Panc1 (cell line): ENCODE measurements at regions of chr7 and their contacts with region 1.

Region 1: DNA sequence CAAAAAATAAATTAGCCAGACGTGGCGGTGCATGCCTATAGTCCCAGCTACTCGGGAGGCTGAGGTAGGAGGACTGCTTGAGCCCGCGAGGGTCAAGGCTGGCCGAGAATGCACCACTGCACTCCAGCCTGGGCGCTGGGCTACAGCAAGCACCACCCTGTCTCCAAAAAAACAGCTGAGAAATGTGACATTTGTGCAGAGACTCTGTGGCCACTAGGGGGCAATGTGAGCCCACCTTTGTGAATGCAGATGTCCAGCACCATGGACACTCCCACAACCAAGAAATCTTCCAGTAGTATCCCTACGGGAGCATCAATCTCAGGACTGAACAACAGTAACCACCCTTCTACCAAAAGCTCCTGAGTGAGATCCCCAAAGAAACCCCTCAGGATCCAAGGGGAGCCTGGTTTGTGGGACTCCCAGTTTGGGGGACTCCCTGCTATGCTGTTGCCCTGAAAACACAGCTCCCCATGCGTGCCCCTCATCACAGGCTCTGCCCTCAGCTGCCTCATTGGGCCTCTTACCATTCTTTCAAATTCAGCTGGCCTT is 6.2 kb upstream of the AHCYL2 start:
- DNase-seq: peak; percentile 73
- ATAC-seq: peak; percentile 93
- H3K4me3 ChIP-seq: no peak overlapping the region
- H3K27ac ChIP-seq: no peak overlapping the region
- H3K4me1 ChIP-seq: no peaks in the 10 kb centered on the region; the same call in 1 of the 2 replicates
- H3K27me3 ChIP-seq: no peaks in the 10 kb centered on the region
- CTCF ChIP-seq: peak; percentile 87

Region 2: DNA sequence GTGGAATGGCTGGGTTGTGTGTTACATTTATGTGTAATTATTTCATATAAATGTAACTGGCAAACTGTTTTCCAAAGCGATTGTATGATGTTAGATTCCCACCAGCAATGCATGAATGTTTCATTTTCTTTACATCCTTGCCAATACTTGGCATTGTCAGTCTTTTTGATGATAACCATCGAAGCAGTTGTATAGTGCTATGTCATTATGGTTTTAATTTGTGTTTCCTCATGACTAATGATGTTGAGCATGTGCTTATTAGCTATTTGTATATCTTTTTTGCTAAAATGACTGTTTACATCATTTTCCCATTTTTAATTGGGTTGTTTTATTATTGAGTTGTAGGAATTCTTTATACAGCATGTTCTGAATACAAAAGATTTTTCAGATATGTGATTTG is 28.5 kb after region 1 on chr7:
- CTCF ChIA-PET with region 1: no interaction called
- POLR2A ChIA-PET with region 1: no interaction called
- in situ Hi-C with region 1: no loop called
- intact Hi-C with region 1: no loop called
- DNase-seq: no peak
- ATAC-seq: no peak
- H3K4me3 ChIP-seq: no peak overlapping the region
- H3K27ac ChIP-seq: no peak overlapping the region
- H3K4me1 ChIP-seq: no peaks in the 10 kb centered on the region
- H3K27me3 ChIP-seq: no peaks in the 10 kb centered on the region
- CTCF ChIP-seq: no peak

Region 3: DNA sequence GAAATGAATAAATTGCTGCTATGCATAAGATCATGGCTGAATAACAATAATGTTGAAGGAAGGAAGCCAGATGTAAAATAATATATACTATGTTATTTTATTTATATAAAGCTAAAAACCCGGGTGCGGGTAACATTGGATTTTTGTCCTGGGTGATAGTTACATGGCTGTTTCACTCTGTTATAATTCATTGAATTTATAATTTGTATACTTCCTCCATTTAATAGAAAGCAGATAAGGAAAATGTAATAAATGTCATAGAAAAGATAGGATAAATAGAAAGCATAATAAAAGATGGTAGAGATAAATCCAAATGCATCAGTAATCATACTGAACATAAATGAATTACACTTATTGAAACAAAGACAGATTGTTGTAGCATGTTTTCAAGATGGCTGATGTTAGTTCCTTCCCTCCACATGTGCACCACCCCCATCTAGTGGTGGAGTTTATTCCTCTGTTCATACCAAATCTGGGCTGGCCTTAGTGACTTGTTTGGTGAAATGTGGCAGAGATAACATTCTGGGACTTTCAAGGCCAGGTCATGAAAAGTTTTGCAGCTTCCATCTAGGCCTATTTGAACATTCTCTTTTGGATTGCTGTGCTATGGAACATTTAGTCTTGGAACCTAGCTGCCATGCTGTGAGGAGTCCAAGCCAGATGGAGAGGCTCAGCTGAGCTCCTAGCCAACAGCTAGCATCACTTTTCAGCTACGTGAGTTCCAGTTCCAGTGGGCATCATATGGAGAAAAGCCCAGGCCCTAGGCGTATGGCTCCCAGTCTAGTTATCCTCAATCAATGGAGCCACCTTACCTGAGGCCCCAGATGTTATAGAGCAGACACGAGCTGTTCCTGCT is 53.1 kb after region 1 on chr7:
- CTCF ChIA-PET with region 1: interaction called, 8 read pairs
- POLR2A ChIA-PET with region 1: no interaction called
- in situ Hi-C with region 1: no loop called
- intact Hi-C with region 1: loop called (anchors 2 kb)
- DNase-seq: peak; percentile 47
- ATAC-seq: peak; percentile 83
- H3K4me3 ChIP-seq: no peak overlapping the region
- H3K27ac ChIP-seq: no peak overlapping the region
- H3K4me1 ChIP-seq: no peaks in the 10 kb centered on the region
- H3K27me3 ChIP-seq: no peaks in the 10 kb centered on the region
- CTCF ChIP-seq: peak; percentile 77

Region 4: DNA sequence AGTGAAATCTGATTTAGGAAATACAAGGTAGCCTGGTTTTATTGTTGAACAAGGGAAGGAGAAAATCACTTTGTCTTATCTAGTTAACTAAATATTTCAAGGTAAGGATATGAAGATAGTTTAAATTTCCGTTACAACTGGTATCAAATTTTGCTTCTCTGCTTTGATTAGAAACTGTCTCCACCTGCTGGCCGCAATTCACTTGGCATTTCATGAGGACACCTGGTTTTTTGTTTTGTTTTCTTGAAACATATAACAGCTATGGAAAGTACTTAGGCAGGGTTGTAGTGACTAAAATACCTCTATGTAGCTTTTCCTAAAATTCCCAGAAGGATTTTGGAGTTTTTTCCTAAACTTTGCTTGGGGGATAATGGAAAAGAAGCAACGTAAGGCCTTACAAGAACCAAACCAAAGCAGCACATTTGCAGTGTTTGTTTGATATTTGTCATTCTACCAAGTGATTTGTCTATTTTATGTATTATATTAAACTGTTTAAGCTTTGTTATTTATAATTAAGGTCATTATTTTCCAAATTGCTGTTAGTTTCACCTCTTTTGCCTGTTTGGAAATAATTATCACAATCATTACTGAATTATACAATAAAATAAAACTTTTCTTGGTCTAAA is 79.8 kb after region 1 on chr7:
- CTCF ChIA-PET with region 1: interaction called, 8 read pairs
- POLR2A ChIA-PET with region 1: no interaction called
- in situ Hi-C with region 1: no loop called
- intact Hi-C with region 1: loop called (anchors 1 kb)
- DNase-seq: peak; percentile 53
- ATAC-seq: no peak
- H3K4me3 ChIP-seq: no peak overlapping the region
- H3K27ac ChIP-seq: no peak overlapping the region
- H3K4me1 ChIP-seq: no peaks in the 10 kb centered on the region; the same call in 1 of the 2 replicates
- H3K27me3 ChIP-seq: no peaks in the 10 kb centered on the region
- CTCF ChIP-seq: peak; percentile 79; the same call in 1 of the 2 replicates

Region 5: DNA sequence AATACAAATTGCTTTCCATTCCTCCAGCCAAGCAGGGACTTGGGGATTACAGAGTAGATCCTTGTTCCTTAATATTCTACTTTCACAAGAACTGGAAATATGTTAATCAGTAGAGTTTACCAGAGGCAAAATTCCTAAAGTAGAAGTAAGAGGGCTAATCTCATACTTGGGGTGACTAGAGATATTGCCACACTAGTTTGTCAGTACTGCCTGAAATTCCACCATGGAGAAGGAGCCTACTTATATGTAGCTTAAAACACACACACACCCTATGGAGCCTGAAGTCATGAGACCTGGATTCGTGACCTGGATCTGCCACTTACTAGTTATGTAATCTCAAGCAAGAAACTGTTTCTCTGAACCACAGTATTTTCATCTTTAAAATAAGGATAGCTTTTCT is 249.5 kb after region 1 on chr7:
- CTCF ChIA-PET with region 1: interaction called, 11 read pairs
- POLR2A ChIA-PET with region 1: no interaction called
- in situ Hi-C with region 1: no loop called
- intact Hi-C with region 1: loop called (anchors 2 kb)
- DNase-seq: no peak
- ATAC-seq: no peak
- H3K4me3 ChIP-seq: no peak overlapping the region
- H3K27ac ChIP-seq: no peak overlapping the region
- H3K4me1 ChIP-seq: no peaks in the 10 kb centered on the region
- H3K27me3 ChIP-seq: no peaks in the 10 kb centered on the region
- CTCF ChIP-seq: no peak